ENCODE measurements at regions of chr2 and their contacts with region 1.

Region 1: DNA sequence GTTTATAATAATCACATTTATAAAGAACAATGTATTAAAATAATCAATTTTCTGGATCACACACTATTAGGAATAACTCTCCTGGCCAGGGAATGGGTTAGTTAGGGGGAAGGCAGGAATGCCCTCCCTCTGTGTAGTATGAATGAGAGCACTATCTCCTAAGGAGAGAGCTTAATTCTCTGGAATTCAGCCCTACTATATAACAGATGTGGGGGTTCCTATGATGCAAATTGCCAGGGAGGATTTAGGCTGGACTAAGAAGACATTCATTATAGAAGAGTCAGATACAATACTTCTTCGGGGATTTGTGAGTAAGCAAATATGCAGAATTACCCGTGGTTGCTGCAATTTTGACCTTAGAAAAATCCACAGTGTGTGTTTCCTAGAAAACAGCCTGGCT is 250.1 kb upstream of the VRK2 start:
- DNase-seq: no peak
- ATAC-seq: no peak
- H3K4me3 ChIP-seq: no peak overlapping the region
- H3K27ac ChIP-seq: no peak overlapping the region
- H3K4me1 ChIP-seq: no peaks in the 10 kb centered on the region
- H3K27me3 ChIP-seq: no peaks in the 10 kb centered on the region
- CTCF ChIP-seq: no peak
- POLR2A ChIP-seq: no peak
- RAD21 ChIP-seq: no peak

Region 2: DNA sequence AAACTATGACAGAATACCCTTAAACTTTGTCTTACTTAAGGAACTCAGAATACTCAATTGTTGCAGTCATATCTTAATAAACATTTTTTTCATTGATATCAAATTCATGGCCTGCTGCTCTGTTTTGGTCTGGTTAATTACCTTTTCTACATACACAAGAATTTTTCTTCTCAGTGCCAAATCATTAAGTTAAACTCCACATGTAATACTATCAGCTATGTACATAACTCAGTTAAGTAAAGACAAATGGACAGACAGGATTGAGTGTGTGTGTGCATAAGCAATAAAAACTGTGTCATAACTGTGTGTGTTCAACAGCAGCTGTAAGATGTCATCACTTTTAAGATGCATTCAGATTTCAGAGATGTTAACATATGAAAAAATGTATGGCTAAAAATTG is 284.5 kb after region 1 on chr2:
- CTCF ChIA-PET with region 1: no interaction called
- POLR2A ChIA-PET with region 1: no interaction called
- dilution Hi-C with region 1: no loop called
- in situ Hi-C with region 1: no loop called
- intact Hi-C with region 1: no loop called
- DNase-seq: no peak
- ATAC-seq: no peak
- H3K4me3 ChIP-seq: no peak overlapping the region
- H3K27ac ChIP-seq: no peak overlapping the region
- H3K4me1 ChIP-seq: no peaks in the 10 kb centered on the region
- H3K27me3 ChIP-seq: no peaks in the 10 kb centered on the region
- CTCF ChIP-seq: no peak
- POLR2A ChIP-seq: no peak
- RAD21 ChIP-seq: no peak

Region 3: DNA sequence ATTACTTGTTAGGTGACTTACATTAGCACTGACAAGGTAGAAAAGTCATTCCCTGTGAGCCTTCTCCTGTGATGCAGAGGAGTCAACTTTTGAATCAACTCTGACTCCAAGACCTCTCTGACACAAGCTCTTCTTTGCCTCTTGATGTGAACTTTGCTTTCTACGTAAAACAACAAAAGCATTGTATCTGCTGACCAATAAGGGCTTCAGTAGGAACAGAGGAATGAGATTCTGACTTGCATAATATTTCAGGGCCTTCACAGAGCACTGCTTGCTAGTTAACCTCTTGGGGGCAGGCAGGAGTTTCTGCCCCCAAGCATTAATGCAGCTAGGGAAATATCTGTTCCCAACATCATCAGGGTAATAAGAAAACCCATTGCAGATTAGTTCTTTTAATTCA is 1965.4 kb after region 1 on chr2:
- CTCF ChIA-PET with region 1: no interaction called
- POLR2A ChIA-PET with region 1: no interaction called
- dilution Hi-C with region 1: no loop called
- in situ Hi-C with region 1: no loop called
- intact Hi-C with region 1: loop called (anchors 10 kb)
- DNase-seq: no peak
- ATAC-seq: no peak
- H3K4me3 ChIP-seq: no peak overlapping the region
- H3K27ac ChIP-seq: no peak overlapping the region
- H3K4me1 ChIP-seq: no peaks in the 10 kb centered on the region
- H3K27me3 ChIP-seq: no peaks in the 10 kb centered on the region
- CTCF ChIP-seq: no peak
- POLR2A ChIP-seq: no peak
- RAD21 ChIP-seq: no peak